K562 (cell line): ENCODE measurements at regions of chr17 and their contacts with region 1.

Region 1: GRCh38 chr17:41530062-41531051 is 2.2 kb upstream of the KRT19 start:
- DNase-seq: peak; percentile 88 to 96 (median 90)
- ATAC-seq: peak; percentile 76
- H3K4me3 ChIP-seq: peak overlapping the region; percentile 11
- H3K27ac ChIP-seq: peak overlapping the region; percentile 94
- H3K4me1 ChIP-seq: peaks cover 45 to 58% of the 10 kb centered on the region in 2 experiments
- H3K27me3 ChIP-seq: no peaks in the 10 kb centered on the region
- CTCF ChIP-seq: no peak; a peak in 1 of 6 replicates
- EP300 ChIP-seq: peak; percentile 89
- POLR2A ChIP-seq: no peak; the same call in 1 of the 2 replicates
- RAD21 ChIP-seq: 0 out of 4 replicates have a peak, but pooled peaks of 1 of the 2 experiments have one; percentile 5

Region 2: GRCh38 chr17:41518789-41519449 is 11.4 kb before region 1 on chr17 and contains the start of gene KRT15:
- CTCF ChIA-PET with region 1: no interaction called
- POLR2A ChIA-PET with region 1: interaction called, 12 read pairs
- in situ Hi-C with region 1: no loop called
- intact Hi-C with region 1: no loop called
- DNase-seq: no peak
- ATAC-seq: peak; percentile 17; the same call in 2 of the 3 replicates
- H3K4me3 ChIP-seq: no peak within 1 kb of the TSS
- H3K27ac ChIP-seq: no peak within 1 kb of the TSS
- H3K4me1 ChIP-seq: peaks cover 39 to 55% of the 10 kb centered on the region in 2 experiments
- H3K27me3 ChIP-seq: no peaks in the 10 kb centered on the region
- CTCF ChIP-seq: 0 out of 6 replicates have a peak, but pooled peaks of 1 of the 3 experiments have one; percentile 8
- EP300 ChIP-seq: no peak
- POLR2A ChIP-seq: no peak
- RAD21 ChIP-seq: no peak
- polyA plus RNA-seq, gene KRT15: 0.28 to 0.60 TPM

Region 3: GRCh38 chr17:41540921-41541625 is 10.7 kb after region 1 on chr17:
- CTCF ChIA-PET with region 1: no interaction called
- POLR2A ChIA-PET with region 1: interaction called, 17 read pairs
- in situ Hi-C with region 1: no loop called
- intact Hi-C with region 1: no loop called
- DNase-seq: peak; percentile 52 to 68 (median 65)
- ATAC-seq: peak; percentile 52
- H3K4me3 ChIP-seq: no peak overlapping the region
- H3K27ac ChIP-seq: no peak overlapping the region
- H3K4me1 ChIP-seq: peaks cover 19 to 24% of the 10 kb centered on the region in 2 experiments
- H3K27me3 ChIP-seq: no peaks in the 10 kb centered on the region
- CTCF ChIP-seq: no peak
- EP300 ChIP-seq: no peak; the same call in 1 of the 2 replicates
- POLR2A ChIP-seq: no peak
- RAD21 ChIP-seq: no peak